Ascending aorta (tissue), 2 donors: ENCODE measurements at regions of chr3 and their contacts with region 1.

Region 1: DNA sequence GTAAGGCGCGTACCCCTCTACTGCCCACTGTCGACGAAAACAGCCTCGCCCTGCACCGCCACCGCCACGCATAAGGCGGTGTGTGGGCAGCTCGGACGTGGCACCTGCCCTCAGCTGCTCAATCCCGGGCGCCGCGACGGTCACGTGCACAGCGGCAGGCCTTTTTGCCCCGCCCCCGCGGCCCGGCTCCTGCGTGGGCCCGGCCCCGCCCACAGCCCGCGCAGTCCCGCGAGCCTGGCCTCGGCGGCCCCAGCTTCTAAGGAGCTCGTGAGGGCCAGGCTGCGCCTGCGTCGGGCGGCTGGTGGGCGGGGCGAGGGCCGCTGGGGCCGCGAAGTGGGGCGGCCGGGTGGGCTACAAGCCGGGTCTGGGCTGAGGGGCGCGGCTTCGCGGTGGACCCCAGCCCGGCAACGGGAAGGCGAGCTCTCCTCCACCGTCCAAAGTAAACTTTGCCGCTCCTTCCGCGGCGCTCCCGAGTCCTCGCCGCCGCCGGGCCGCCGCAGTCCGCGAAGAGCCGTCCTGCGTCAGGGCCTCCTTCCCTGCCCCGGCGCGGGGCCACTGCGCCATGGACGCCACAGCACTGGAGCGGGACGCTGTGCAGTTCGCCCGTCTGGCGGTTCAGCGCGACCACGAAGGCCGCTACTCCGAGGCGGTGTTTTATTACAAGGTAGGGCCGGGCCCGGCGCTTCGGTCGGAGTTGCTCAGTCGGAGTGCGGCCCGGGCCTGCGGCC is at the start of gene CAPN7:
- DNase-seq: peak; percentile 84 to 97
- H3K4me3 ChIP-seq: peak within 1 kb of the TSS; percentile 89 to 99
- H3K27ac ChIP-seq: peak within 1 kb of the TSS; percentile 91 to 97
- H3K4me1 ChIP-seq: peaks cover 0 to 25% of the 10 kb centered on the region in 2 donors
- H3K27me3 ChIP-seq: no peaks in the 10 kb centered on the region
- CTCF ChIP-seq: peak; percentile 46 to 60 (median 47)
- total RNA-seq, gene CAPN7: 38.6 TPM

Region 2: DNA sequence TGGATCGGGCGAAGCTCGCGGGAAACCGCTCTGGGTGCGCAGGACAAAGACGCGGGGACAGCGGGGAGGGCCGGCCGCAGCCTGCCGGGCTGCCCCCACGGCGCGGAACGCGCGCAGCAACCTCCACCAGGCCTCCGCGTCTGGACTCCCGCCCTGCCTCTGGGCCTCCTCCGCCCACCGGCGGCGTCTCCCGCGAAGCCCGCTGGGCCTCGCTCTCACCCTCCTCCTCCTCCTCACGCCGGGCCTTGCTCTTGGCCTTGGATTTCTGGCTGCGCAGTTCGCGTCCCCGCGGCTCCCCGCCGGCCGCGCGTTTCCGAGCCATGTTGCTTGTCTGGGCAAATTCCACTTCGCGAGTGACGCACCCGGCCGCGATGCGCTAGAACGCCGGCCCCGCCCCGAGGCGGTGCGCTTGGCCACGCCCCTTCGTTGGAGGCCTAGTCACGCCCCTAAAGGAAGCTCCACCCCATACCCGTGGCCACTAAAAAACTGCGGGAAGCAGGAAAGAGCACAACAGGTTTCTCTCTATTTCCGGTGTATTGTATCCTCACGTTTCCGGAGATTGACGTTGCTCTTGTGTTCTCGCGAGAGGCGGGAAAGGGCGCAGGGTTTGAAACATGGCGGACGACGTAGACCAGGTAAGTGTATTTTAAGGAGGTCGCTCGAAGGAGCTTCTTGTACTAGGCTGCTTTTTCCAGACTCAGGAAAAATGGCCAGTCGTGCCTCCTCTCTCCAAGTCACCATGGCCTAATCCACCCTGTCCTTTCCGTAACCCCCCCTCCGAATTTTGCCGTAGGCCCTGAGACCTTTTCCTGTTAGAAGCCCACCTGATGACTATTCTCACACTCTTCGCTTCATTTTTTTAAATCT is 1027.6 kb before region 1 on chr3 and contains the starts of genes LSM3 and XPC:
- intact Hi-C with region 1: loop called (anchors 5 kb)
- DNase-seq: peak; percentile 92 to 98
- H3K4me3 ChIP-seq: peak within 1 kb of the TSS; percentile 69 to 71
- H3K27ac ChIP-seq: peak within 1 kb of the TSS; percentile 91 to 99
- H3K4me1 ChIP-seq: peaks cover 0 to 31% of the 10 kb centered on the region in 2 donors
- H3K27me3 ChIP-seq: no peaks in the 10 kb centered on the region
- CTCF ChIP-seq: peak in 1 of 3 experiments; percentile 8
- total RNA-seq, gene LSM3: 3.9 TPM
- total RNA-seq, gene XPC: 48.9 TPM

Region 3: DNA sequence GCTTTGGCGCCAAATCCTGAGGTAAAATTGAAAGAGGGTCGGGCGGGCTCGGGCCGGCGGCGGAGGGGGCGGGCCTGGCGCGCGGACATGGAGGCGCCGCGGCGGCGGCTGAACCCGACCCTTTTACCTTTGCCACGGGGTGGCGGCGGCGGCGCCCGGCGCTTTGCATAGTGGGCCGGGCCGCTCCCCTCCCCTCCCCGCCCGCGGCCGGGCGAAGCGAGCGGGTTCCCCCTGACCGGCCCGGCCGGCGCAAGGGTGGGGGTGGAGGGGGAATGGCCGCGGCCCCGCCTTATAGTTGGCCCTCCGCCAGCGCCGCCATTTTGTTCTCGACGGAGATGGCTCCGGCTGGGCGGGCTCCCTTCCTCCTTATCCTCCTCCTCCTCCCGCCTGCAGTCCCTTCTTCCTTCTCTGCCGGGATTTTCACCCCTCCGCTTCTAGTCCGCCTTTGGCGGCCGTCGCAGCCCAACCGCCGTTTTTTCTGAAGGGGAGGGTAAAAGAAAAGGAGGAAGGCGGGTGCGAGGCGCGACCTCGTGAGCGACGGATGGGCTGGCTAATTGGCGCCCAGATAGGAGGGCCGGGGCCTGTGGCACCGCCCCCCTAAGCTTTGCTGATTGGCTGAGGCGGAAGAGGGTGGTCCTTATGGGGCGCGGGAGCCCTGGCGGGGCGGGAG is 258.1 kb before region 1 on chr3:
- intact Hi-C with region 1: loop called (anchors 2 kb)
- DNase-seq: peak; percentile 80 to 97
- H3K4me3 ChIP-seq: peak overlapping the region; percentile 85 to 96
- H3K27ac ChIP-seq: peak overlapping the region; percentile 97 to 98
- H3K4me1 ChIP-seq: peaks cover 0 to 24% of the 10 kb centered on the region in 2 donors
- H3K27me3 ChIP-seq: no peaks in the 10 kb centered on the region
- CTCF ChIP-seq: no peak

Region 4: GRCh38 chr3:15268033-15268631 is 62.0 kb after region 1 on chr3:
- intact Hi-C with region 1: loop called (anchors 5 kb)
- DNase-seq: peak in 1 of 2 donors; percentile 93
- H3K4me3 ChIP-seq: no peak overlapping the region
- H3K27ac ChIP-seq: peak overlapping the region; percentile 81 to 84
- H3K4me1 ChIP-seq: peaks cover 0 to 18% of the 10 kb centered on the region in 2 donors
- H3K27me3 ChIP-seq: no peaks in the 10 kb centered on the region
- CTCF ChIP-seq: peak; percentile 92 to 96 (median 95)

Region 5: DNA sequence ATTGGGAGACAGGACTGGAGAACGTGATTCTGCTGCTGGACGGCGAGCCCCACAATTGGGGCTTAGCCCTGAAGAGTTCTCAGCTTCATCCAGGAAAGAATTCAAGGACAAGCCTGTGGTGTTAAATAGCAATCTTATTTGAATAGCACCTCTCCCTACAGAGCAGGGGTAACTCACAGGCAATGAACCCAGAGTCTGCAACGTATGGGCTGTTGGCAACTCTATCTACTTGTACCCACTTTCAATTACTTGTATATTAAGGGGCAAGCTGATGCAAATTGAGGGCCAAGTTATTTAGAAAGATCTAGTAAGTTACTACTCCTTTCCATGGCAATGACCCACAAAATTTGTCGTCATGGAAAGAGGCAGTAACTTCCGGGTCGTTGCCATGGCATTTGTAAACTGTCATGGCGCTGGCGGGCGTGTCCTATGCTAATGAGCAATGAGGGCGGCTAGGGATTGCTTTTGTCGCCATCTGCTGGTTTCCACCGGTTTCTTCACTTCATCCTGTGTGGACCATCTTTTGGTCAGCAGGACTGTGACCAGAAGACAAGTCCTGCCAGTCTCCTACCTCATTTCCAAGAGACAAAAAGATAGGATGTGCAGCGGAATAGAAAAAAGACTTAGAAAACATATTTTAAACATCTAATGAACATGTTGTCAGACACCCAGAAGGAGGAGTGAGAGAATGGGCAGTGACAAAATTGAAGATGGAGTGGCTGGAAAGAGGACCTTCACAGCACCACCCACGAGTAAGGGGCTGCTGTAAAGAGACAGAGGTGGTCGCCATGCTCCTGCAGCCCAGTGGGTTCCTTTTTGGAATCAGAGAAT is 172.1 kb after region 1 on chr3:
- intact Hi-C with region 1: loop called (anchors 2 kb)
- DNase-seq: peak; percentile 89 to 98
- H3K4me3 ChIP-seq: no peak overlapping the region
- H3K27ac ChIP-seq: peak overlapping the region; percentile 61 to 66
- H3K4me1 ChIP-seq: peaks cover 0 to 2% of the 10 kb centered on the region in 2 donors
- H3K27me3 ChIP-seq: no peaks in the 10 kb centered on the region
- CTCF ChIP-seq: peak; percentile 81 to 96 (median 85)

Region 6: GRCh38 chr3:15427182-15427880 is 221.2 kb after region 1 on chr3 and contains the starts of genes EAF1 and METTL6:
- intact Hi-C with region 1: loop called (anchors 5 kb)
- DNase-seq: peak; percentile 31 to 91
- H3K4me3 ChIP-seq: peak within 1 kb of the TSS; percentile 78 to 93
- H3K27ac ChIP-seq: peak within 1 kb of the TSS; percentile 86 to 90
- H3K4me1 ChIP-seq: peaks cover 5 to 10% of the 10 kb centered on the region in 2 donors
- H3K27me3 ChIP-seq: no peaks in the 10 kb centered on the region
- CTCF ChIP-seq: peak in 2 of 3 experiments; percentile 12 to 22
- total RNA-seq, gene EAF1: 5.2 TPM
- total RNA-seq, gene METTL6: 8.0 TPM

Region 7: DNA sequence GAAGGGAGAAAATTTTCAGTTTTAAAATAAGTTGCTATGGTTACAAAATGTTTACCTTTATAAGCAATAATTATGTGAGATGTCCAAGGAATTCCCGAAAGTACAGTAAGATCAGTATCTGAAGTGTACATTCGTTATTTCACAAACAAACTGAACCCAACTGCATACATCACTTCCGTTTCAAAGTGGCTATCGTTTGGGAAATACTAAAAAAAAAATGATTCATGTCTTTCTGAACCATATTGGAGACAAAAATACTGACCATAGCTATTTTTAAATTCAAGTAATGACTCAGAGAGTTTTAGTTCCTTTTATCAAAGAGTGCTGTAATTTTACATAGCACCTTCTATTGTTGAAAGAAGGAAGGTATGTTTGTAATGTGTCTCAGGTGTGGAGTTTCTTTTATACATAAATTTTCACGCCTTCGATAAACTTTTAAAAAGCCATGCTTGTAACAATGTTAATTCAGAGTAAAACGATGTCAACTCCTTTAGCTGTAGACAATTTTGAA is 599.7 kb after region 1 on chr3:
- intact Hi-C with region 1: loop called (anchors 10 kb)
- DNase-seq: no peak
- H3K4me3 ChIP-seq: peak overlapping the region in 1 of 2 donors; percentile 3
- H3K27ac ChIP-seq: peak overlapping the region; percentile 43 to 72
- H3K4me1 ChIP-seq: peaks cover 6 to 14% of the 10 kb centered on the region in 2 donors
- H3K27me3 ChIP-seq: no peaks in the 10 kb centered on the region
- CTCF ChIP-seq: no peak